Ascending aorta (tissue), 2 donors: ENCODE measurements at regions of chr3 and their contacts with region 1.

Region 1: DNA sequence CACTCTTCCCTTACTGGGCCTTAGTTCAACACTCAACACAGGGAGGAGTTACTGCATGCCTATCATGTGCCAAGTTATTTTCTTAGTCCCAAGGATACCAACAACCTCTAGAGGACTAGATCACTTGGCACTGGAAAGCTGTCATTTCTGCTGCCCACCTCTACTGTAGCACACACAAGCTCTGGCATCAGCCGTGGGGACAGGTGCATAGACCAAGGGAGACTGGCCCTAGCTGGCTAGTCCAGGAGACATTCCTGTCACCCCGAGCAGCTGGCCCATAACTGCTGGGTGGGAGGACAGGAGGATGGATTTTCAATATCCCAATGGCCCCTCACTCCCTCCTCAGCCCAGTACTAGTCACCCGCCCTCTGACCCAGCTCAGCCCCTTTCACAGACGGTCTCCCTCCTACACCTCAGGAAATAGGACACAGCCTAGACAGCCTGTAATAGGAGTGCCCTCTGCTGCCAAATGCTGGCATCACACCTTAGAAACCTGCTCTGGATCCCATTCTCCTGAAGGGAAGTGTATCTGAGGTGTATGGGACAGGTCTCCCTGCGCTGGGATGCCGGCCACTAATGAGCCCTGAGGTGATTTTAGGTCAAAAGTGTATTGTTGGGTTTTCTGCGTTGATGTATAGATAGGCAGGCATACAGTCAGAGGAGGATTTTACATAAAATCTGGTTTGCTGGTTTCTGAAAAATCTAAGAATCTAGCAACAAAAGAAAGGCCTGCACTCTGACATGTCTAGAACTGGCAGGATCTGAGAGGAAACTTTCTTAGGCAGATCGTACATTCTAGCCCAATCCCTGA is 3.4 kb upstream of the DZIP1L start:
- DNase-seq: peak in 1 of 2 donors; percentile 88
- H3K4me3 ChIP-seq: no peak overlapping the region
- H3K27ac ChIP-seq: no peak overlapping the region
- H3K4me1 ChIP-seq: peaks cover 0 to 5% of the 10 kb centered on the region in 2 donors
- H3K27me3 ChIP-seq: no peaks in the 10 kb centered on the region
- CTCF ChIP-seq: peak; percentile 54 to 86 (median 85)

Region 2: GRCh38 chr3:137524751-137525150 is 594.1 kb before region 1 on chr3:
- intact Hi-C with region 1: no loop called
- DNase-seq: no peak
- H3K4me3 ChIP-seq: no peak overlapping the region
- H3K27ac ChIP-seq: no peak overlapping the region
- H3K4me1 ChIP-seq: no peaks in the 10 kb centered on the region
- H3K27me3 ChIP-seq: no peaks in the 10 kb centered on the region
- CTCF ChIP-seq: no peak

Region 3: GRCh38 chr3:138082085-138082991 is 36.5 kb before region 1 on chr3:
- intact Hi-C with region 1: no loop called
- DNase-seq: no peak
- H3K4me3 ChIP-seq: no peak overlapping the region
- H3K27ac ChIP-seq: no peak overlapping the region
- H3K4me1 ChIP-seq: no peaks in the 10 kb centered on the region
- H3K27me3 ChIP-seq: no peaks in the 10 kb centered on the region
- CTCF ChIP-seq: no peak

Region 4: GRCh38 chr3:138174421-138175122 is 55.8 kb after region 1 on chr3 and contains the start of gene DBR1:
- intact Hi-C with region 1: loop called (anchors 2 kb)
- DNase-seq: peak; percentile 15 to 88
- H3K4me3 ChIP-seq: peak within 1 kb of the TSS; percentile 62 to 70
- H3K27ac ChIP-seq: peak within 1 kb of the TSS; percentile 53 to 71
- H3K4me1 ChIP-seq: peaks cover 5 to 13% of the 10 kb centered on the region in 2 donors
- H3K27me3 ChIP-seq: no peaks in the 10 kb centered on the region
- CTCF ChIP-seq: no peak
- total RNA-seq, gene DBR1: 2.0 TPM

Region 5: GRCh38 chr3:138329127-138329983 is 210.5 kb after region 1 on chr3 and contains the start of gene NME9:
- intact Hi-C with region 1: loop called (anchors 5 kb)
- DNase-seq: peak; percentile 53 to 93
- H3K4me3 ChIP-seq: peak within 1 kb of the TSS; percentile 51 to 76
- H3K27ac ChIP-seq: peak within 1 kb of the TSS; percentile 2 to 29
- H3K4me1 ChIP-seq: peaks cover 3 to 6% of the 10 kb centered on the region in 2 donors
- H3K27me3 ChIP-seq: no peaks in the 10 kb centered on the region
- CTCF ChIP-seq: peak in 2 of 3 experiments; percentile 49 to 68
- total RNA-seq, gene NME9: not detected

Region 6: GRCh38 chr3:138834359-138835212 is 715.8 kb after region 1 on chr3 and contains the start of gene PIK3CB:
- intact Hi-C with region 1: loop called (anchors 10 kb)
- DNase-seq: peak; percentile 31 to 93
- H3K4me3 ChIP-seq: peak within 1 kb of the TSS; percentile 70 to 98
- H3K27ac ChIP-seq: peak within 1 kb of the TSS; percentile 89 to 90
- H3K4me1 ChIP-seq: peaks cover 0 to 13% of the 10 kb centered on the region in 2 donors
- H3K27me3 ChIP-seq: no peaks in the 10 kb centered on the region
- CTCF ChIP-seq: peak; percentile 26 to 39 (median 28)
- total RNA-seq, gene PIK3CB: 9.3 TPM